Naive thymus-derived CD4-positive, alpha-beta T cell (primary cell): ENCODE measurements at regions of chr4 and their contacts with region 1.

Region 1: DNA sequence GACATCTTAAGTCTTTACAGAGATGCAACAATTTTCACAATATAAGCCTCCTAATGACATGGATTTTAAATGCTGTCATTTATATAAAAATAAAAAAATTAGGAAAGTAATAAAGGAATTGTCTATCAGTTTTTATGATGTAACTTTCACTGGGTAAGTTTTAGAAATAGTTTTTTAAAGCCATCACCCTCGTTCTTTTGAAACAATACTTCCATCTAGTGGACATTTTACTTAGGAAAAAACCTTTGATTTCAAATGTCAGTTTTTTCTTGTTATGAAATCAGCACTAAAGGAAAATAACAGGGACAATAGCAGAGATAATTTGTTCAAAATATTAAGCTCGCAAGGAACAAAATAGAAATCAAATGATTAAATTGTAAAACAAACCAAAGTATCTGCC is 24.3 kb upstream of the NDNF start:
- DNase-seq: peak in 5 of 9 donors; percentile 29 to 52 (median 41)
- ATAC-seq: no peak
- H3K4me3 ChIP-seq: no peak overlapping the region
- H3K4me3 Mint-ChIP-seq: no peak overlapping the region
- H3K27ac ChIP-seq: no peak overlapping the region
- H3K27ac Mint-ChIP-seq: no peak overlapping the region
- H3K4me1 ChIP-seq: no peaks in the 10 kb centered on the region
- H3K4me1 Mint-ChIP-seq: peaks cover 0 to 5% (median 0%) of the 10 kb centered on the region in 7 donors
- H3K27me3 ChIP-seq: no peaks in the 10 kb centered on the region
- H3K27me3 Mint-ChIP-seq: peaks cover 0 to 30% (median 0%) of the 10 kb centered on the region in 5 donors

Region 2: DNA sequence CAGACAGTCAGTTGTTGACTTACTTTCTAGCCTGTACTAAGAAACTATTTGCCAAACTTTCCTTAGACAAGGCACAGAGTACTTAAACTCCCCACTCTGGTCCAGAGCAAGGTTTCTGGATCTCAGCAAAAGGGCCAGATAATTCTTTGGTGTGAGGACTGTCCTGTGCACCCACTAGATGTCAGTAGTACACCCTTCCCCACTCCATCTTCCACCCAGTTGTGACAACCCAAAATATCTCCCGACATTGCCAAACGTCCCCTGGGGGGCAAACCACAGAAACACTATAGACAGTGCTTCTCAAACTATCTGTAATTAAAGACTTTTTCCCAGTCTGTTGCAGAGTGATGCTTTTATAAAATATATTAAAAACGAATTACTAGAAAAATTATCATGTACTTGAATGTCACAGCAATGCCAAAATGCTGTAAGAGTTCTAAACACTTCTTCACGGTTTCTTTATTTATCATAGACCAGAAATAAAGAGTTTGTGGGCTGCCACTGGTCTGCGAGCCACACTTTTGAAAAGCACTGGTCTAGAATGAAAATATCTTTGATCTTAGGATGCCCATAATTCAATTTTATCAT is 377.6 kb before region 1 on chr4:
- CTCF ChIA-PET with region 1: interaction called, 7 read pairs
- POLR2A ChIA-PET with region 1: no interaction called
- intact Hi-C with region 1: loop called in 1 of 2 experiments (anchors 1 kb)
- DNase-seq: peak in 6 of 9 donors; percentile 6 to 40 (median 36)
- ATAC-seq: peak; percentile 82
- H3K4me3 ChIP-seq: no peak overlapping the region
- H3K4me3 Mint-ChIP-seq: no peak overlapping the region
- H3K27ac ChIP-seq: no peak overlapping the region
- H3K27ac Mint-ChIP-seq: no peak overlapping the region
- H3K4me1 ChIP-seq: no peaks in the 10 kb centered on the region
- H3K4me1 Mint-ChIP-seq: peaks cover 0 to 2% (median 0%) of the 10 kb centered on the region in 7 donors
- H3K27me3 ChIP-seq: no peaks in the 10 kb centered on the region
- H3K27me3 Mint-ChIP-seq: peaks cover 0 to 16% (median 0%) of the 10 kb centered on the region in 5 donors

Region 3: DNA sequence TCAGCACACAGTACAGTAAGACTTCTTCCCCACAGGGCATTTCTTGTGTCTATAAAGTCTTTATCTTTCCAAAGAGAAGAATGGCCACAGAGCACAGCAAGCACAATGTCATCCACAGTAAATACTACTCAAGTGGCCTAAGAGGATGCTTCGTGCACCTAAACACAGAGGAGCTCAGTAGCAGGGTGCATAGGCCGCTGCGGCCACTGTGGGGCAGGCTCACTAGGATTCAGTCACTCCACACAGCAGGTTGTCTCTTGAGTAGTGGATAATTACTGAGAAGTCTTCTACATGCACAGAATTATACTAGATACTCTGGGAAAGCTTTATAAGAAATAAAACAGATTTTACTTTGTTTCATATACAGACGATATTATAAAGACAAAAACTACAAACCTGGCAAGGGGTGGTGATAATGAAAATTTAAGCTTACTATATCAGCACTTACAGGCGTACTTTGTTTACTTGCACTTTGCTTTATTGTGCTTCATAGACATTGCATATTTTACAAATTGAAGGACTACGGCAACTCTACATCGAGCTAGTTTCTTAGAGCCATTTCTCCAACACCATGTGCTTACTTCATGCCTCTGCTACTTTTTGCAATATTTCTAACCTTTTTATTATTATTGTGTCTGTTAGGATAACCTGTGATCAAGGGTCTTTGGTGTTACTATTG is 252.6 kb before region 1 on chr4:
- CTCF ChIA-PET with region 1: no interaction called
- POLR2A ChIA-PET with region 1: no interaction called
- intact Hi-C with region 1: loop called (anchors 5 to 10 kb)
- DNase-seq: peak in 3 of 9 donors; percentile 4 to 5 (median 5)
- ATAC-seq: peak; percentile 46
- H3K4me3 ChIP-seq: no peak overlapping the region
- H3K4me3 Mint-ChIP-seq: no peak overlapping the region
- H3K27ac ChIP-seq: no peak overlapping the region
- H3K27ac Mint-ChIP-seq: no peak overlapping the region
- H3K4me1 ChIP-seq: no peaks in the 10 kb centered on the region
- H3K4me1 Mint-ChIP-seq: peaks cover 2 to 8% (median 5%) of the 10 kb centered on the region in 7 donors
- H3K27me3 ChIP-seq: no peaks in the 10 kb centered on the region
- H3K27me3 Mint-ChIP-seq: peaks cover 0 to 12% (median 3%) of the 10 kb centered on the region in 5 donors

Region 4: DNA sequence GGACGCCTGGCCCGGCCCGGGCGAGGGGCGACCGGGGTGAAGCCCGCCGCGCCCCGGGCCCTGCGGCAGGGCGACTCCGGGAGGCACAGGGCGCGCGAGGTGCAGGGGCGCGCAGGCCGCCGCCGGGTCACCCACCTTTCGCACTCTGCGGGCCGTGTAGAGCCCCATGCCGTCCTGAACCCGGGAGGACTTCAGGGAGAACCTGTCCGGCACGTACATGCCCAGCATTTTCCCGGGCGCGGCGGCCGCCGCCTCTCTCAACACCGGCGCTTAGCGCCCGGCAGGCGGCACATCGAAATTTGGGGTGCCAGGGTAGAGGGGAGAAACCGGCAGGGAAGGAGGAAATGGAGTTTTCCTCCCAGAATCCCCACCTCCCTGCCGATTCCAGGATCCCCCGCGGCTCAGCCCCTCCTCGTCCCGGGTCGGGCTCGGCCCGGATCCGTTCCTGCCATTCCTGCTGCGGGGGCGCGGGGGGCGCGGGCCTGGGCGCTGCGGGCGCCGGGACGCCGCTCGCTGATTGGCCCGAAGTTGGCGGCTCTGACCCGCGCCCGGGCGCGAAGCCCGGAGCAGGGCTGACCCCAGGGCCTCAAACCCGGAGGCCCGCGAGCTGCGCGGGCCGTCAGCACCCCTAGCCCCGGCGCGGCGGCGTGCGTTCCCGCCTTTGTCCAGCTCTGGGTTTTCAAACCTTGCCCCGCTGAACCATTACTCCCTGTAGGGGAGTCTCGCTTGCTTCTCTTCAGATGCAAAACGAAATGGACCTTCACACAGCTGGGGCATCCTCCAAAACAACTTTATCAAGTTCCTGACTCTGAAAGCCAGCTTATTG is 174.0 kb before region 1 on chr4 and contains the start of gene PRDM5:
- CTCF ChIA-PET with region 1: no interaction called
- POLR2A ChIA-PET with region 1: interaction called, 5 read pairs
- intact Hi-C with region 1: loop called in 1 of 2 experiments (anchors 1 kb)
- DNase-seq: peak; percentile 6 to 37 (median 22)
- ATAC-seq: peak; percentile 67
- H3K4me3 ChIP-seq: peak within 1 kb of the TSS; percentile 72
- H3K4me3 Mint-ChIP-seq: peak within 1 kb of the TSS; percentile 82 to 98 (median 96)
- H3K27ac ChIP-seq: peak within 1 kb of the TSS; percentile 18
- H3K27ac Mint-ChIP-seq: peak within 1 kb of the TSS in 8 of 9 donors; percentile 75 to 93 (median 82)
- H3K4me1 ChIP-seq: peaks cover 0 to 5% of the 10 kb centered on the region in 2 donors
- H3K4me1 Mint-ChIP-seq: peaks cover 8 to 16% (median 13%) of the 10 kb centered on the region in 7 donors
- H3K27me3 ChIP-seq: no peaks in the 10 kb centered on the region
- H3K27me3 Mint-ChIP-seq: peaks cover 0 to 69% (median 0%) of the 10 kb centered on the region in 5 donors
- total RNA-seq, gene PRDM5: 0.29 to 1.1 (median 0.72) TPM in 4 of 5 experiments, not detected in the other

Region 5: GRCh38 chr4:121041307-121042090 is 55.1 kb before region 1 on chr4:
- CTCF ChIA-PET with region 1: no interaction called
- POLR2A ChIA-PET with region 1: no interaction called
- intact Hi-C with region 1: no loop called
- DNase-seq: peak in 8 of 9 donors; percentile 17 to 60 (median 50)
- ATAC-seq: peak; percentile 91
- H3K4me3 ChIP-seq: no peak overlapping the region
- H3K4me3 Mint-ChIP-seq: peak overlapping the region in 7 of 10 donors; percentile 4 to 59 (median 20)
- H3K27ac ChIP-seq: no peak overlapping the region
- H3K27ac Mint-ChIP-seq: peak overlapping the region in 6 of 9 donors; percentile 2 to 25 (median 18)
- H3K4me1 ChIP-seq: peaks cover 0 to 14% of the 10 kb centered on the region in 2 donors
- H3K4me1 Mint-ChIP-seq: peaks cover 8 to 18% (median 12%) of the 10 kb centered on the region in 7 donors
- H3K27me3 ChIP-seq: no peaks in the 10 kb centered on the region
- H3K27me3 Mint-ChIP-seq: peaks cover 0 to 53% (median 0%) of the 10 kb centered on the region in 5 donors

Region 6: GRCh38 chr4:121072224-121073003 is 24.2 kb before region 1 on chr4 and contains the start of gene NDNF:
- CTCF ChIA-PET with region 1: no interaction called
- POLR2A ChIA-PET with region 1: no interaction called
- intact Hi-C with region 1: loop called in 1 of 2 experiments (anchors 2 kb)
- DNase-seq: peak; percentile 13 to 76 (median 33)
- ATAC-seq: peak; percentile 71
- H3K4me3 ChIP-seq: peak within 1 kb of the TSS; percentile 64
- H3K4me3 Mint-ChIP-seq: peak within 1 kb of the TSS; percentile 83 to 95 (median 90)
- H3K27ac ChIP-seq: no peak within 1 kb of the TSS
- H3K27ac Mint-ChIP-seq: peak within 1 kb of the TSS in 5 of 9 donors; percentile 8 to 65 (median 51)
- H3K4me1 ChIP-seq: peaks cover 0 to 6% of the 10 kb centered on the region in 2 donors
- H3K4me1 Mint-ChIP-seq: peaks cover 20 to 37% (median 23%) of the 10 kb centered on the region in 7 donors
- H3K27me3 ChIP-seq: peaks cover 10% of the 10 kb centered on the region in 2 donors
- H3K27me3 Mint-ChIP-seq: peaks cover 45 to 75% (median 60%) of the 10 kb centered on the region in 5 donors
- total RNA-seq, gene NDNF: not detected

Region 7: DNA sequence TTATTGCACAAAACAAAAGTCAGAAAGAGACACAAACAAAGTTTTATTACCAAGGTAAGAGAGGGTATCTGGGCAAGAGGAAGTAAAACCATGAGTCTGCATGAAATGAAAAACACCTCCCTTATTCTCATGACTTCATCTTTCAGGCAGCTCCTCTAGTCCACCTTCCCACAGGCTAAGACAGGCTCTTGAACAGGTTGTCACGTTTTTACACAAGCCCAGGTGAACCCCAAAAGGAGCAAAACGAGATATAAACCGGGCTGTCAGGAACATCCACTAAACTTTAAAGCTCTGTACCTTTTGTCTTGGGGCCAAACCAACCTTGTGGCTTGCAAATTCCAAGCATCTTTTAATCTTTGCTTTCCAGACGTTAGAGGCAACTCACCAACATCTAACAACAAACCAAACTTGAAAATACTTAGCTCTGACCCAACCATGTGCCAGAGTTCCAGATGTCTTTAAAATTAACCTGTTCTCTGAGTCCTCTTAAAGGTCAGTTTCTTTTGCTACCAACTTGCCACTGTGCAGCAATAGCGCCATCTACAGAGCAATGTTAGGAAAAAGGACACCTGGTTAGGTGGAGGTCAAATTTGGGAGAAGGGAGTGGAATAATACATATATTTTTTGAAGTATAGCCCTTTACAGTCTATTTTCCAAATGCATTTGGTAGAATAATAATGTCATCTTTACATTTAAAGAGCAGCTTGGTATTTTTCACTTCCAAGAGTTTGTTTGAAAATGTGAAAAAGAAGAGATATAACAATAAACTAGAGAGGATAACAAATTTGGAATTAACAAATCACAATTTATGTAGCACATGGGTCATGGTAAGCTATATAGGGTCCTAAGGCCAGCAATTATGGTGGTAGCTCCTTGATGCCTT is 211.1 kb after region 1 on chr4:
- CTCF ChIA-PET with region 1: interaction called, 3 read pairs
- POLR2A ChIA-PET with region 1: no interaction called
- intact Hi-C with region 1: loop called in 1 of 2 experiments (anchors 1 kb)
- DNase-seq: peak in 7 of 9 donors; percentile 10 to 52 (median 33)
- ATAC-seq: peak; percentile 70
- H3K4me3 ChIP-seq: no peak overlapping the region
- H3K4me3 Mint-ChIP-seq: no peak overlapping the region
- H3K27ac ChIP-seq: no peak overlapping the region
- H3K27ac Mint-ChIP-seq: peak overlapping the region in 1 of 9 donors; percentile 39
- H3K4me1 ChIP-seq: peaks cover 0 to 9% of the 10 kb centered on the region in 2 donors
- H3K4me1 Mint-ChIP-seq: peaks cover 3 to 19% (median 15%) of the 10 kb centered on the region in 7 donors
- H3K27me3 ChIP-seq: no peaks in the 10 kb centered on the region
- H3K27me3 Mint-ChIP-seq: peaks cover 0 to 17% (median 0%) of the 10 kb centered on the region in 5 donors

Region 8: GRCh38 chr4:121344098-121344497 is 247.5 kb after region 1 on chr4:
- CTCF ChIA-PET with region 1: no interaction called
- POLR2A ChIA-PET with region 1: no interaction called
- intact Hi-C with region 1: no loop called
- DNase-seq: no peak
- ATAC-seq: no peak
- H3K4me3 ChIP-seq: no peak overlapping the region
- H3K4me3 Mint-ChIP-seq: no peak overlapping the region
- H3K27ac ChIP-seq: no peak overlapping the region
- H3K27ac Mint-ChIP-seq: no peak overlapping the region
- H3K4me1 ChIP-seq: no peaks in the 10 kb centered on the region
- H3K4me1 Mint-ChIP-seq: no peaks in the 10 kb centered on the region
- H3K27me3 ChIP-seq: no peaks in the 10 kb centered on the region
- H3K27me3 Mint-ChIP-seq: peaks cover 3 to 28% (median 9%) of the 10 kb centered on the region in 5 donors